ENCODE measurements at regions of chr2 and their contacts with region 1.

Region 1: DNA sequence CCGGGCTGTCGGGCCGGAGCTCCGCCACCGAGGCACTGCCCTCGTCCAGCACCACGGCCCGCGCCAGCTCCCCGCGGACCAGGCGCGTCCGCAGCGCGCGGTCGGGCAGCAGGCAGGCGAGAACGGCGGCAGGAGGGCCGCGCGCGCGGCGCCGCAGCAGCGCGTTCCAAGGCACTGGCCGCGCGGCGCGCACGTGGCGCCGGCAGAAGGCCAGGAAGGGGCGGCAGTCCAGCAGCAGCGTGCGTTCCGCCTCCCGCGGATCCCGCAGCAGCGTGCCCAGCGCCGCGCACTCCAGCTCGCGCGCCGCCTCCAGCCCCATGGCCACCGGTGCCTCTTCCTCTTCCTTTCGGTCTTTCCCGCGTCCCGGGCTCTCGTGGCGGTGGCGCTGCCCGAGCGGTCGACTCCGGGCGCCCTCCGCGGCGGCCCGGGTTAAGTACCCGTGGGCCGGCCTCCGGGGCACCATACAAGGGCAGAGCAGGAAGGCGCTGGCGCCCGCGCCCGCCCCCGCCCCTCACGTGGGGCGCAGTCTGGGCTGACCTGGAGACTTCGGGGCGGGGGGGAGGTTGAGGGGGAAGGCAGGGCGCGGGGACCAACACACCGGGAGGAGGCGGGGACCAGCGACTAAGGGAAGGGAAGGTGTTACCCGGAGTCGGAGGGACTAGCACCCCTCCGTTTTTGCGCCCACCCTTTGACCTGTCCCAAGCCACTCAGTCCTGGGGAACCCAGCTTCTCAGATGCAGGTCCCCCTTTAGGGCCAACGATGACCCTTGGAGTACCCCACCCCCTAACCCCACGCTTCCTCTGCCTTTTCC is at the start of gene DUSP2:
- DNase-seq: peak; percentile 97
- H3K4me3 Mint-ChIP-seq: peak within 1 kb of the TSS; percentile 98
- H3K27ac Mint-ChIP-seq: peak within 1 kb of the TSS; percentile 95
- H3K4me1 Mint-ChIP-seq: peaks cover 52% of the 10 kb centered on the region
- H3K27me3 Mint-ChIP-seq: no peaks in the 10 kb centered on the region
- total RNA-seq, gene DUSP2: 436 and 445 TPM in 2 replicates

Region 2: GRCh38 chr2:96157651-96158553 is 12.7 kb after region 1 on chr2:
- intact Hi-C with region 1: loop called (anchors 1 kb)
- DNase-seq: peak; percentile 92
- H3K4me3 Mint-ChIP-seq: peak overlapping the region; percentile 70
- H3K27ac Mint-ChIP-seq: peak overlapping the region; percentile 92
- H3K4me1 Mint-ChIP-seq: peaks cover 64% of the 10 kb centered on the region
- H3K27me3 Mint-ChIP-seq: no peaks in the 10 kb centered on the region

Region 3: GRCh38 chr2:96208143-96209010 is 63.1 kb after region 1 on chr2 and contains the start of gene STARD7:
- intact Hi-C with region 1: loop called (anchors 2 kb)
- DNase-seq: peak; percentile 99
- H3K4me3 Mint-ChIP-seq: peak within 1 kb of the TSS; percentile 96
- H3K27ac Mint-ChIP-seq: peak within 1 kb of the TSS; percentile 90
- H3K4me1 Mint-ChIP-seq: peaks cover 50% of the 10 kb centered on the region
- H3K27me3 Mint-ChIP-seq: no peaks in the 10 kb centered on the region
- total RNA-seq, gene STARD7: 212 and 217 TPM in 2 replicates

Region 4: GRCh38 chr2:96320728-96321622 is 175.7 kb after region 1 on chr2:
- intact Hi-C with region 1: loop called (anchors 5 kb)
- DNase-seq: peak; percentile 85
- H3K4me3 Mint-ChIP-seq: peak overlapping the region; percentile 88
- H3K27ac Mint-ChIP-seq: peak overlapping the region; percentile 98
- H3K4me1 Mint-ChIP-seq: peaks cover 55% of the 10 kb centered on the region
- H3K27me3 Mint-ChIP-seq: no peaks in the 10 kb centered on the region

Region 5: DNA sequence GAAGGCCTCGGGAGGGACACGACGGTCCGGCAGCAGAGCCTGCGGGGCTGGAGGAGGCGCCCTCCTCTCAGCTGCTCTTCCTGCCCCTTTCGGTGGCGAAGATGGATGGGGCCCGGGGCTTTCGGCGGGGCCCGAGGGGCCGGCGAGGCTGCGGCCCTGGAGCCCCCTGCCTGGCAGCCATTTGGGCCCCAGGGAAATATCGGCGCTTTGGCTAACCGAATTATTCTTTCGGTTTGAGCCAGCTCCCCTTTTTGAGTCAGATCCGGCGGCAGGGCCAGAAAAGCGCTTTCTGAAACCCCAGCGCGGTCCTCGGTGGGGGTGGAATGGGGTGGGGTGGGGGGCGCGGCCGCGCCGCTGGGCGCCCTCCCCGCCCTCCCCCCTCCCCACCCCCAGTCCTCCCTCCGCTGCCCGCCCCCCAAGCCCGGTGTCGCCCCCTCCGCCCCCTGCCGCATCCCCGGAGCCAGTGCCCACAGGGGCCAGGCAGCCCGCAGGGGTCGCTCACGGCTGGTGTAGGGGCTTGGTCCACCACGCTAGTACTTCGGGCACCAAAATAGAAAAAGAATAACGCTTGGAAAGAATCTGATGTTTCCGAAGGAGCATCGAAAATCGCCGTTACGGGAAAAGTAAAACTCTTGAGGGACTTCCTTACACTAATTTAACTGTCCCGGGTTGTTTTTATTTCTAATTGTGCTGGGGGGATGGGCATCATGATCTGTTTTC is 382.2 kb after region 1 on chr2:
- intact Hi-C with region 1: loop called (anchors 5 kb)
- DNase-seq: peak; percentile 91
- H3K4me3 Mint-ChIP-seq: peak overlapping the region; percentile 81
- H3K27ac Mint-ChIP-seq: peak overlapping the region; percentile 94
- H3K4me1 Mint-ChIP-seq: peaks cover 86% of the 10 kb centered on the region
- H3K27me3 Mint-ChIP-seq: no peaks in the 10 kb centered on the region

Measured in activated CD4-positive, alpha-beta T cell treated with anti-CD3 and anti-CD28 coated beads, Interleukin-2, amount 10 ng/mL, durations not matched to agents 24 days and 14 days (primary cell).